Sigmoid colon (tissue), 7 donors: ENCODE measurements at regions of chr10 and their contacts with region 1.

Region 1: DNA sequence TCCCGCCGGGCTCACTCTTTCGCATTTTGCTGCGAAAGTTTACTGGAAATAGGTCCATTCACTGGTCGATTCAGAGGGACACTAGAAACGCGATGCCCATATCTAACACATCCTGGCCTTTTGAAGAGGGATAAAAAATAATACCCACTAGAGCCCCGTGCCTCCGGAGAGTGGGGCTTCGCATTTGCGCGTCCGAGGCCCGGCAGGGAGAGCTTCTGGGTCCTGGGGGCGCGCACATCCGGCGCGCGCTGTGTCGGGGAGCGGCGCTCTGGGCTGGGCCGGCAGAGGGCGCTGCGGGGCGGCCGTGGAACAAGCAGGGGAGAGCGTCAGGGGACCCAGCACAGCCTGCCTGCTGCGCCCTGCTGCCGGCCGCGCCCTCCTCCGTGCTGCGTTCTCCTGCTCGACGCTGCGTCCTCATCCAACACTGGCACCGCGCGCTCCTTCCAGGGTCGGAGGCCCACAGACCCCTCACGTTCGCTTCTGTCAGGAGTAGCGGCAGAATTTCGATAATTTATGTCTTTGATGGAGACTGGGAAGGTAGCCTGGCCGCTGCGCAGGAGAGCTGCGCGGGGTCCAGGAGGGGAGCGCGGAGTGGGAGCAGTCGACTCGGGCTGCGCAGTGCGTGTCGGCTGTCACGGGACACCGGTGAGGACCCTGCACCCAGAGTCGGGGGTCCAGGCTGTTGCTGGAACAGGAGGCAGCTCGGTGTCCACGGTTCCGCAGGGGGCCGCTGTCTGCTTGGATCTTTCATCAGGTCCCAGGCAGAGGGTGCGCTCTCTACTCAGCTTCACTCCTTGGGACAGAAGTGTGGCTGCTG is 41.5 kb upstream of the ZNF32 start:
- DNase-seq: peak; percentile 91
- H3K4me3 ChIP-seq: peak overlapping the region; percentile 40 to 58 (median 55)
- H3K27ac ChIP-seq: peak overlapping the region; percentile 74 to 78 (median 76)
- H3K4me1 ChIP-seq: peaks cover 0 to 24% (median 14%) of the 10 kb centered on the region in 4 donors
- H3K27me3 ChIP-seq: no peaks in the 10 kb centered on the region
- CTCF ChIP-seq: peak; percentile 70 to 98 (median 78)
- EP300 ChIP-seq: no peak
- POLR2A ChIP-seq: no peak

Region 2: DNA sequence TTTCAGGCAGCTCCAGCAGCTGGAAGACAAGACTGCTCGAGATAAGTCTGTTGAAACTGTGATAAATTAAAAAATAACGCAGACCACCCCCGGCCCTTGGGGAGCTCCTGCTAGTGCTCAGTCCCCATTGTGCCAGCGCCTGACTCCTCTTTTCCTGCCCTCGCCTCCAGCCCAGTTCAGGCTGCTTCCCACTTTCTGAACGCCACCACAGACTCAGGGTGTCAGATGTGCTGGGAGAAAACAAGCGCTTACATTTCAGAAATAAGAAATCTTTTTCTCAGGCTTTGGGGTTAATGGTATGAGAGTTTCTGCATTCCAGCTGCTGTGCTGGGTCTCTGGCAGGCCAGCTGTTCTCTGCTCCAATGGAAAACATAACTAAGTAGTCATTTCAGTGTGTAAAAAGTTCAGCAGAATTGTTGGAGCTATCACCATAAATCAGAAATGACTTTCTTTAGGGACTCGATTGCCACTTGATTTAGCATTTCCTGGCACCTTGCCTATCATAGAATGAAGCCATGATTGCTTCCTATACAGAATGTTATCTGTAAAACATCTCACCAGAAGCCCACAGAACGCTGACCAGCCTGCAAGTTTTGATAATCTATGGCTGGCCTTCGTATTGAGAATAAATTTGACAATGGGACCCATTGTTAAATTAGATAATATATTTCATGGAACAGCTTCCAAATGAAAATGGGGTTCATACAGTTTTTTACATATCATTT is 215.5 kb after region 1 on chr10:
- intact Hi-C with region 1: loop called (anchors 10 kb)
- DNase-seq: no peak
- H3K4me3 ChIP-seq: no peak overlapping the region
- H3K27ac ChIP-seq: peak overlapping the region; percentile 40 to 66 (median 58)
- H3K4me1 ChIP-seq: peaks cover 0 to 32% (median 25%) of the 10 kb centered on the region in 4 donors
- H3K27me3 ChIP-seq: no peaks in the 10 kb centered on the region
- CTCF ChIP-seq: no peak
- EP300 ChIP-seq: no peak
- POLR2A ChIP-seq: no peak

Region 3: GRCh38 chr10:44068716-44069482 is 378.7 kb after region 1 on chr10:
- intact Hi-C with region 1: loop called (anchors 10 kb)
- DNase-seq: no peak
- H3K4me3 ChIP-seq: no peak overlapping the region
- H3K27ac ChIP-seq: peak overlapping the region in 2 of 4 donors; percentile 10 to 43
- H3K4me1 ChIP-seq: peaks cover 0 to 70% (median 64%) of the 10 kb centered on the region in 4 donors
- H3K27me3 ChIP-seq: no peaks in the 10 kb centered on the region
- CTCF ChIP-seq: no peak
- EP300 ChIP-seq: no peak
- POLR2A ChIP-seq: no peak